ENCODE measurements at regions of chr16 and their contacts with region 1.

Region 1: DNA sequence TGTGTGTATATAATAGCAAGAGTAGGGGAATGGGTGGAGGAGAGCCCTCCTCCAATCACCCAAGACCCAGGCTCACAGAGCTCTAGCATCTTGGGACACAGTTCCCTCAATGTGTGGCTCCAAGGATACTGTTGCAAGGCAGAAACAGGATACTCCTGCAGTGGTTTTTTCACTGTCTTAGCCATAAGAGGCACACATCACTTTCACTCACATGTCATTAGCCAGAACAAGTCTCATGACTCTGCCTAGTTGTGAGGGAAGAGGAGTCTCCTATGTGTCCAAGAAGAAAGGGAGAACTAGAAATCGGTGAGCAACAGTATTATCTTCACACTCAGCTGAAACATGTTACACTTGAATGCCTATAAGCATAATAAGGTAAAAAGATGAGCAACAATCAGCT is 11.1 kb upstream of the NUDT7 start:
- DNase-seq: no peak
- ATAC-seq: no peak
- H3K4me3 ChIP-seq: no peak overlapping the region
- H3K27ac ChIP-seq: no peak overlapping the region
- H3K4me1 ChIP-seq: no peaks in the 10 kb centered on the region
- H3K27me3 ChIP-seq: peaks cover 13% of the 10 kb centered on the region
- CTCF ChIP-seq: no peak
- POLR2A ChIP-seq: no peak
- RAD21 ChIP-seq: no peak

Region 2: DNA sequence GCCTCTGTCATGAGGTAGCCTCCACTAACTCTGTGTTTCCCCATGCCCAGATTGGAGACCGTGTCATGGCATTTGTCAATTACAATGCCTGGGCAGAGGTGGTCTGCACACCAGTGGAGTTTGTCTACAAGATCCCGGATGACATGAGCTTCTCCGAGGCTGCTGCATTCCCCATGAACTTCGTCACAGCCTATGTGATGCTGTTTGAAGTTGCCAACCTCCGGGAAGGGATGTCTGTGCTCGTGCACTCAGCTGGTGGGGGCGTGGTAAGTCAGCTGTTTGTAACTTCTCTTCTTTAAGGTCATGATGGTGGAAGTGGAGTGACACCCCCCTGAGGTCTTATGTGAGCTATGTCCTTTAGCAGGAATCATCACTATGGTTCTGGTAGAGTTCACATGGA is 114.0 kb after region 1 on chr16:
- CTCF ChIA-PET with region 1: interaction called, 10 read pairs
- POLR2A ChIA-PET with region 1: no interaction called
- dilution Hi-C with region 1: no loop called
- in situ Hi-C with region 1: no loop called
- intact Hi-C with region 1: no loop called
- DNase-seq: no peak
- ATAC-seq: no peak
- H3K4me3 ChIP-seq: no peak overlapping the region
- H3K27ac ChIP-seq: no peak overlapping the region
- H3K4me1 ChIP-seq: no peaks in the 10 kb centered on the region
- H3K27me3 ChIP-seq: no peaks in the 10 kb centered on the region
- CTCF ChIP-seq: no peak
- POLR2A ChIP-seq: no peak
- RAD21 ChIP-seq: no peak

Measured in IMR-90 (cell line).